WTC11 (cell line): ENCODE measurements at regions of chr22 and their contacts with region 1.

Region 1: GRCh38 chr22:42090596-42091454 is at the start of gene NDUFA6:
- DNase-seq: peak; percentile 98
- ATAC-seq: peak; percentile 97
- H3K4me3 Mint-ChIP-seq: peak within 1 kb of the TSS; percentile 97
- H3K27ac Mint-ChIP-seq: peak within 1 kb of the TSS; percentile 99
- H3K4me1 Mint-ChIP-seq: peaks cover 12% of the 10 kb centered on the region; the same call in 1 of the 2 replicates
- H3K27me3 Mint-ChIP-seq: peaks cover under 1% of the 10 kb centered on the region; the same call in 1 of the 2 replicates
- CTCF ChIP-seq: peak; percentile 58; the same call in 1 of the 2 replicates
- total RNA-seq, gene NDUFA6: 84.6 to 90.8 TPM (median 85.9 TPM) in 3 replicates

Region 2: GRCh38 chr22:41946629-41947423 is 144.0 kb before region 1 on chr22 and contains the start of gene CENPM:
- CTCF ChIA-PET with region 1: interaction called, 16 read pairs
- POLR2A ChIA-PET with region 1: interaction called, 6 read pairs
- DNase-seq: peak; percentile 95
- ATAC-seq: peak; percentile 93
- H3K4me3 Mint-ChIP-seq: peak within 1 kb of the TSS; percentile 73
- H3K27ac Mint-ChIP-seq: peak within 1 kb of the TSS; percentile 49; the same call in 1 of the 2 replicates
- H3K4me1 Mint-ChIP-seq: peaks cover 46% of the 10 kb centered on the region
- H3K27me3 Mint-ChIP-seq: peaks cover 4% of the 10 kb centered on the region; the same call in 1 of the 2 replicates
- CTCF ChIP-seq: no peak
- total RNA-seq, gene CENPM: 40.3 to 43.7 TPM (median 41.7 TPM) in 3 replicates

Region 3: GRCh38 chr22:41976961-41977566 is 113.8 kb before region 1 on chr22:
- CTCF ChIA-PET with region 1: interaction called, 20 read pairs
- POLR2A ChIA-PET with region 1: interaction called, 5 read pairs
- DNase-seq: peak; percentile 40
- ATAC-seq: peak; percentile 47
- H3K4me3 Mint-ChIP-seq: peak overlapping the region; percentile 63
- H3K27ac Mint-ChIP-seq: no peak overlapping the region
- H3K4me1 Mint-ChIP-seq: peaks cover 18% of the 10 kb centered on the region
- H3K27me3 Mint-ChIP-seq: peaks cover 54% of the 10 kb centered on the region
- CTCF ChIP-seq: no peak

Region 4: GRCh38 chr22:42039271-42039670 is 51.6 kb before region 1 on chr22:
- CTCF ChIA-PET with region 1: no interaction called
- POLR2A ChIA-PET with region 1: no interaction called
- DNase-seq: no peak
- ATAC-seq: no peak
- H3K4me3 Mint-ChIP-seq: no peak overlapping the region
- H3K27ac Mint-ChIP-seq: no peak overlapping the region
- H3K4me1 Mint-ChIP-seq: no peaks in the 10 kb centered on the region
- H3K27me3 Mint-ChIP-seq: peaks cover 33% of the 10 kb centered on the region
- CTCF ChIP-seq: no peak

Region 5: DNA sequence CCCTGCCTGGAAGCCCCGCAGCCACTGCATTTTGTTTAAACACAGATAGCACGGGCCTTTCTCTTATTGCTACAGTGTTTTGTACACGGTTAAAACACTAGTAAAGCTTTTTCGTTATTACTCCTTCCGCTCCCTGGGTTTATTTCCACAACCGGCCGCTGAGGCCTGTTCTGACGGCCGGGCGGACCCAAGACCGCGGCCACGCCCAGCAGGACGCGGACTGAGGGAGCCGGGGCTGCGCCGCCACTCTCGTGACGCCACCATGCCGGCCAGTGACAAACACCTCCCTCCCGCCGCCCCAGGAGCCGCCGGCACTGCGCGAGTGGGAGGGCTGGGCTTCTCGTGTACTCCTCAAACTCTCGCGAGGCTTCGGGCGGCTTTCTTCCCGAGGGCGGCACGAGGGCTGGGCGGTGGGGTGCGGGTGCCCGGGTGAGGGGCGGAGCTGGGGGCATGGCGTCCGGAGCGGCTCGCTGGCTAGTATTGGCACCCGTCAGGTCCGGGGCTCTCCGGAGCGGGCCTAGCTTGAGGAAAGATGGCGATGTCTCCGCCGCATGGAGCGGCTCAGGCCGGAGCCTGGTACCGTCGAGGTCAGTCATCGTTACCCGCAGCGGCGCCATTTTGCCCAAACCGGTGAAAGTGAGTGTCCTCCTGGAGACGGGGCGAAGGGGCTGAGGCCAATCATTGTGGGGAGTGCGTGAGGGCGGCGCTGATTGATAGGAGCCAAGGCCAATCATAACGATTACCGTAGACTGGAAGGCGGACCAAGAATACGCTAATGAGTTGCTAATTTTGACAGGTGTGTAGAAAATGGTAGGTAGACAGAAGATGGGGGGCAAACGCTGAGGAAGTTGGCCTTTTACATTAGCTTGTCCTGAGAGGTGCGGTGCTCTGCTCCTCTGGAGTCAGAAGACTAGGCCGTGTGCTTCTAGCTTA is 11.2 kb before region 1 on chr22 and contains the start of gene SMDT1:
- CTCF ChIA-PET with region 1: interaction called, 27 read pairs
- POLR2A ChIA-PET with region 1: interaction called, 16 read pairs
- DNase-seq: peak; percentile 94
- ATAC-seq: peak; percentile 95
- H3K4me3 Mint-ChIP-seq: peak within 1 kb of the TSS; percentile 95
- H3K27ac Mint-ChIP-seq: peak within 1 kb of the TSS; percentile 89
- H3K4me1 Mint-ChIP-seq: peaks cover 24% of the 10 kb centered on the region
- H3K27me3 Mint-ChIP-seq: no peaks in the 10 kb centered on the region
- CTCF ChIP-seq: no peak
- total RNA-seq, gene SMDT1: 39.9 to 50.6 TPM (median 49.6 TPM) in 3 replicates

Region 6: GRCh38 chr22:42116848-42117424 is 26.1 kb after region 1 on chr22:
- CTCF ChIA-PET with region 1: interaction called, 87 read pairs
- POLR2A ChIA-PET with region 1: interaction called, 5 read pairs
- DNase-seq: peak; percentile 62
- ATAC-seq: peak; percentile 72
- H3K4me3 Mint-ChIP-seq: no peak overlapping the region
- H3K27ac Mint-ChIP-seq: no peak overlapping the region
- H3K4me1 Mint-ChIP-seq: peaks cover 11% of the 10 kb centered on the region
- H3K27me3 Mint-ChIP-seq: peaks cover 31% of the 10 kb centered on the region
- CTCF ChIP-seq: no peak